Heart right ventricle (tissue), 16 donors: ENCODE measurements at regions of chr1 and their contacts with region 1.

Region 1: DNA sequence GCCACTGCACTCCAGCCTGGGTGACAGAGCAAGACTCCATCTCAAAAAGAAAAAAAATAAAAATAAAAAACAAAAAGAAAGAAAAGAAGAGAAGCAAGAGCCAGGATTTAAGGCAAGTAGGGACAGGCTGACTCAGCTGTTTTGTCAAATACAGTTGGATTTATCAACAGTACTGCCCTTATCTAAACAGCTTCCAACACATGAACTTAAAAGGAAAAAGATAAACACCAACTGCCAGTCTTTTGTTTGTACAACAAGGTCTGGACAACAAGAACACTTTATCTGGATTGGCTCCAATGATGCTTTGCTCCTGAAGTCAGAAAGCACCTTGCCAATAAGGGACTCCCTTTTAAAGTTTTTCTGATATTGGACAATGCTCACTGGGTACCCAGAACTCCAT is 886.0 kb downstream of the ADGRL2 start:
- DNase-seq: no peak
- ATAC-seq: no peak
- H3K4me3 ChIP-seq: no peak overlapping the region
- H3K27ac ChIP-seq: no peak overlapping the region
- H3K4me1 ChIP-seq: no peaks in the 10 kb centered on the region
- H3K27me3 ChIP-seq: no peaks in the 10 kb centered on the region
- CTCF ChIP-seq: no peak

Region 2: GRCh38 chr1:82710091-82710490 is 23.3 kb after region 1 on chr1:
- intact Hi-C with region 1: loop called in 1 of 10 experiments (anchors 2 kb)
- DNase-seq: no peak
- ATAC-seq: no peak
- H3K4me3 ChIP-seq: no peak overlapping the region
- H3K27ac ChIP-seq: no peak overlapping the region
- H3K4me1 ChIP-seq: peaks cover 0 to 4% (median 0%) of the 10 kb centered on the region in 9 donors
- H3K27me3 ChIP-seq: no peaks in the 10 kb centered on the region
- CTCF ChIP-seq: no peak